ENCODE measurements at regions of chr11 and their contacts with region 1.

Region 1: GRCh38 chr11:67630228-67630942 is 648 bp upstream of the NUDT8 start:
- DNase-seq: peak; percentile 99
- CTCF ChIP-seq: peak; percentile 61

Region 2: GRCh38 chr11:67391304-67392132 is 238.9 kb before region 1 on chr11 and contains the start of gene RAD9A:
- CTCF ChIA-PET with region 1: no interaction called
- POLR2A ChIA-PET with region 1: no interaction called
- DNase-seq: peak; percentile 98
- CTCF ChIP-seq: no peak

Region 3: GRCh38 chr11:67409261-67409666 is 221.1 kb before region 1 on chr11:
- CTCF ChIA-PET with region 1: no interaction called
- POLR2A ChIA-PET with region 1: no interaction called
- DNase-seq: peak; percentile 75
- CTCF ChIP-seq: no peak

Region 4: DNA sequence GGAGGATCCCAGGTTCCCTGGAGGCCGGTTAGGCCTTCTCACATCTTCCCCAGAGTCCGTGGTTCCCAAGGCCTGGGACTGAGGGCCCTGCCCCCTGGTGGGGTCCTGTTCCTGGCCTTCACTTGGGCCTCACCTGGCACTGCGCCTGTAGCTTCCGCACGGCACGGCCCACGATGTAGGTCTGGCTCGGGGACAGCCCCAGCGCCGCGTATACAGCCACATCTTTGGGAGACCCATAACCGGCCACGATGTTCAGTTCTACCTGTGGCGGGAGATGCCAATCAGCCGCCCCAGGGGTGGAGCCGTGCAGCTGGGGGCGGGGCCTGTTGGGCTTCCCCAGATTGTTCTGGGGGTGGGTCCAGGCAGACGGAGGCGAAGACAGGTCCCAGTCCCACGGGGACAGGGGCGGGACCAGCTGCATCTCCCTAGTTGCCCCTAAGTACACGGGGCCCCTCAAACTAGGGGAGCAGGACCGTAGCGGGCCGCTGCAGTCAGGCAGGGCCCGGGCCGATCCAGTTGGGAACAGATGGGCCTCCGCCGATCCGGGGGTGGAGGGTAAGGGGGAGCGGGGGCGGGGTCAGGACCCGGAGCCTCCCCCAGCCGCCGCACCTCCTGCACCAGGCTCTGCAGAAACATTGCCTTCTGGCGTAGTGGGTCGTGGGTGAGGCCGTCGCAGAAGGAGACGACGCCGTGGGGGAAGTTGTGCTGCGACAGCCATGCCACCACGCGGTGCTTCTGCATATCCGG is 137.4 kb before region 1 on chr11:
- CTCF ChIA-PET with region 1: no interaction called
- POLR2A ChIA-PET with region 1: no interaction called
- DNase-seq: no peak
- CTCF ChIP-seq: no peak

Region 5: GRCh38 chr11:67572747-67573419 is 57.5 kb before region 1 on chr11:
- CTCF ChIA-PET with region 1: interaction called, 19 read pairs
- POLR2A ChIA-PET with region 1: no interaction called
- DNase-seq: no peak
- CTCF ChIP-seq: peak; percentile 76

Region 6: DNA sequence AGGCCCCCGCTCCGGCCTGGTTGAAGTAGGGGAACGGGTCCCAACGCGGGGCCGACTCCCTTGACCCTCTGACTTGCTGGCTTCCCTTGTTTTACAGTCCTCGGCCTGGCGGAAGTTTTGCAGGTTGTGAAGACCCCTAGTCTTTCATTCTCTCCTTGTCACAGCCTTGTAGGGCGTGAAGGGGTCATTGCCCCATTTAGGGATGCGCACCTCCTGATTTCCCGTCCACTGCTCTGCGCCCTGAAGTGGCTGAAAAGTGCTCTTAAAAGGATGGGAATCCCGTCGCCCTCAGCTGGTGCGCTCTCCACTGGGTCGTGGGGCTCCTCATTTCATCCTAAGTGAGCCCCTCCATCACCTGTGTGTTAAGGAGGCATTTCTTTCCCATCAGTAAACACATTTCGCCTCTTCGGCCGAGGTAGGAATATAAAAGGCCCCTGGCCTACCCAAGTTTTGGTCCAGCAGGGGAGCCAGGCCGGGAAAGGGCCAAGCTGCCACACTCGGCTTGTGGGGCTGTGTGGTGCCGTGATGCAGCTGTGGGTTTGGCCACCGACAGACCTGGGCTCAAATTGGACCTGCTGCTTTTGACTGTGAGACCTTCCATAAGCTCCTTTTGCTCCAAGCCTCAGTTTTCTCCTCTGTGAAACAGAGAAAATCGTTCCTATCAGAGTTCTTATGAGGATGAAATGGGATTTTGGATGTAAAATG is 23.0 kb before region 1 on chr11:
- CTCF ChIA-PET with region 1: interaction called, 64 read pairs
- POLR2A ChIA-PET with region 1: no interaction called
- DNase-seq: no peak
- CTCF ChIP-seq: no peak

Region 7: GRCh38 chr11:67648140-67649123 is 18.0 kb after region 1 on chr11:
- CTCF ChIA-PET with region 1: interaction called, 142 read pairs
- POLR2A ChIA-PET with region 1: no interaction called
- DNase-seq: peak; percentile 79
- CTCF ChIP-seq: peak; percentile 51

Region 8: DNA sequence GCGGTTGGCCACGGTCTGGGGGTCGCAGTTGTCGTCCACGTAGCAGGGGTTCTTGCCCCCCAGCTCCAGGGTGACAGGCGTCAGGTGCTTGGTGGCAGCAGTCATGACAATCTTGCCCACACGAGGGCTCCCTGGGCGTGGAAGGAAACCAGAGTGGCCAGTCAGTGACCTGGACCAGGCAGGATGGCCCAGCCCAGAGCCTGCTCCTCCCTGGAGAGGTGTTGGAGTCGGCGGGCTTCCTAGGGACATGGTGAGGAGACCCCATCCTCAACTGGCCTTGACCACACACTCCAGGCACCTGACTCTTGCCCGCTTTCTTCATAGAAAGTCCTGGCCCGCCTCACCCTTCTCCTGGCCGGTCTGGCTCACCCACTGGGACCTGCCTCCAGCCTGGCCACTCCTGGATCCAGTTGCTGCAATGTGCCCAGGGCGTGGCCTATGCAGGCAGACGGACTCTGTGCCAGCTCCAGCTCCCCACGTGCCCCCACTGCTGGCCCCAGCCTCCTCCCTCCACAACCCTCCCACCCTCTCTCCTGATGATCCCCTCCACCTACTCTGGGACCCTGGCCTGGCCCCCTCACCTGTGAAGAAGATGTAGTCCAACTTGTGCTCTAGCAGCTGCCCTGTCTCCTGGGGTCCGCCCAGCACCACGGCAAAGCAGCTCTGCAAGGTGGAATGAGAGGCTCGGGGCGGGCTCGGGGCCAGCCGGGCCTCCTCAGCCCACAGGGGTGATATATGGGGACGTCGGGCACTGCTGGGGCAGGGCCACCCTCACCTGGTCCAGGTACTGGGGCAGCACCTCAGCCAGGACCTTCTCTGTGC is 35.4 kb after region 1 on chr11:
- CTCF ChIA-PET with region 1: interaction called, 72 read pairs
- POLR2A ChIA-PET with region 1: no interaction called
- DNase-seq: peak; percentile 41
- CTCF ChIP-seq: no peak

Measured in GM10248 (cell line).